ENCODE measurements at regions of chr11 and their contacts with region 1.

Region 1: GRCh38 chr11:117134431-117134830 is 9.7 kb upstream of the PAFAH1B2 start:
- DNase-seq: no peak
- ATAC-seq: no peak

Region 2: GRCh38 chr11:117205211-117205818 is 70.9 kb after region 1 on chr11:
- intact Hi-C with region 1: loop called (anchors 5 kb)
- DNase-seq: peak; percentile 41
- ATAC-seq: no peak